Psoas muscle (tissue), 8 donors: ENCODE measurements at regions of chr9 and their contacts with region 1.

Region 1: GRCh38 chr9:503881-504852 is 289.5 kb downstream of the DOCK8 start:
- DNase-seq: peak; percentile 78 to 88
- ATAC-seq: peak; percentile 87 to 93 (median 92)
- H3K4me3 ChIP-seq: peak within 1 kb of the TSS; percentile 86
- H3K27ac ChIP-seq: peak within 1 kb of the TSS; percentile 79
- H3K4me1 ChIP-seq: no peaks in the 10 kb centered on the region
- H3K27me3 ChIP-seq: no peaks in the 10 kb centered on the region
- CTCF ChIP-seq: peak; percentile 40

Region 2: DNA sequence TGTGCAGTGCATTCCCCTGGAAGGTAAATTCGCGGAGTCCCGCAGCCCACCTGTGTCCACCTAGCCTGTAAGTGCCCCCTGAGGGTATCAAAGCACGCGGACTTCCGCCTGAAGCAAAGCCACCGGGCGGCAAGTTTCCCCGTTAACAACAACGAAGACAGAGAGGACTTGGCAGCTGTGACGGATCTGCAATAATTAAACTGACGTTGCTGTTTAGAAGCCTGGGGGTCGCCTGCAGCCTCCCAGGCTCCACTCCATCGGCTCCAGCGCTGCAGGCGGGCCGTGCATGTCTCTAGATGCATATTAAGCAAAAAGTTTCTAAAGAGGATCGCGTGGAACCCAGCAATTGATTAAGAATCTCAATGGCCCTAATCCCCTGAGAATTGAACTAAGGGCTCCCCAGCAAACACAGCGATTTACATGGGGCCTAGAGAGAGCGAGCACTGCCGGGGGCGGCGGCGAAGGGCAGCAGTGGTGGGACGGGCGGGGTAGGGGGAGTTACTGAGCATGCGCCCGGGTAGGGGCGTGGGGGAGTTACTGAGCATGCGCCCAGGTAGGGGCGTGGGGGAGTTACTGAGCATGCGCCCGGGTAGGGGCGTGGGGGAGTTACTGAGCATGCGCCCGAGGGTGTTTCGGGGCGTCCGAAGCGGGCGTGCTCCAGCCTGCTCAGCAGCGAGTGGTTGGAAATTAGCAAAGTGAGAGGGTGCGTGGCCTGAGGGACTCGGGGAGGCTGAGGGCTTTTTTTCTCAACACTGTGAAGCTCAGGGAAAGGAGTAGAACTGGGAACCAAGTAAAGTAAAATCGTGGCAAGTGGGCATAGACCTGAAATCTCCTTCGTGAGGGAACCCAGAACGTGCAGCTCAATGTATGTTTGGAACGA is 34.3 kb before region 1 on chr9:
- intact Hi-C with region 1: loop called in 1 of 2 experiments (anchors 2 kb)
- DNase-seq: peak; percentile 86 to 93
- ATAC-seq: peak; percentile 97 to 99 (median 98)
- H3K4me3 ChIP-seq: peak overlapping the region; percentile 71
- H3K27ac ChIP-seq: peak overlapping the region; percentile 77
- H3K4me1 ChIP-seq: peaks cover 3% of the 10 kb centered on the region
- H3K27me3 ChIP-seq: no peaks in the 10 kb centered on the region
- CTCF ChIP-seq: no peak

Region 3: GRCh38 chr9:534886-535285 is 30.7 kb after region 1 on chr9:
- intact Hi-C with region 1: loop called in 1 of 2 experiments (anchors 5 kb)
- DNase-seq: peak in 1 of 2 donors; percentile 64
- ATAC-seq: peak; percentile 63 to 80 (median 73)
- H3K4me3 ChIP-seq: no peak overlapping the region
- H3K27ac ChIP-seq: no peak overlapping the region
- H3K4me1 ChIP-seq: peaks cover 38% of the 10 kb centered on the region
- H3K27me3 ChIP-seq: no peaks in the 10 kb centered on the region
- CTCF ChIP-seq: no peak

Region 4: GRCh38 chr9:551986-552929 is 48.1 kb after region 1 on chr9:
- intact Hi-C with region 1: no loop called
- DNase-seq: no peak
- ATAC-seq: no peak
- H3K4me3 ChIP-seq: no peak overlapping the region
- H3K27ac ChIP-seq: no peak overlapping the region
- H3K4me1 ChIP-seq: peaks cover 2% of the 10 kb centered on the region
- H3K27me3 ChIP-seq: no peaks in the 10 kb centered on the region
- CTCF ChIP-seq: no peak

Region 5: GRCh38 chr9:1120500-1121165 is 616.5 kb after region 1 on chr9:
- intact Hi-C with region 1: no loop called
- DNase-seq: no peak
- ATAC-seq: no peak
- H3K4me3 ChIP-seq: no peak overlapping the region
- H3K27ac ChIP-seq: no peak overlapping the region
- H3K4me1 ChIP-seq: no peaks in the 10 kb centered on the region
- H3K27me3 ChIP-seq: no peaks in the 10 kb centered on the region
- CTCF ChIP-seq: no peak